Calu3 (cell line): ENCODE measurements at regions of chr3 and their contacts with region 1.

Region 1: DNA sequence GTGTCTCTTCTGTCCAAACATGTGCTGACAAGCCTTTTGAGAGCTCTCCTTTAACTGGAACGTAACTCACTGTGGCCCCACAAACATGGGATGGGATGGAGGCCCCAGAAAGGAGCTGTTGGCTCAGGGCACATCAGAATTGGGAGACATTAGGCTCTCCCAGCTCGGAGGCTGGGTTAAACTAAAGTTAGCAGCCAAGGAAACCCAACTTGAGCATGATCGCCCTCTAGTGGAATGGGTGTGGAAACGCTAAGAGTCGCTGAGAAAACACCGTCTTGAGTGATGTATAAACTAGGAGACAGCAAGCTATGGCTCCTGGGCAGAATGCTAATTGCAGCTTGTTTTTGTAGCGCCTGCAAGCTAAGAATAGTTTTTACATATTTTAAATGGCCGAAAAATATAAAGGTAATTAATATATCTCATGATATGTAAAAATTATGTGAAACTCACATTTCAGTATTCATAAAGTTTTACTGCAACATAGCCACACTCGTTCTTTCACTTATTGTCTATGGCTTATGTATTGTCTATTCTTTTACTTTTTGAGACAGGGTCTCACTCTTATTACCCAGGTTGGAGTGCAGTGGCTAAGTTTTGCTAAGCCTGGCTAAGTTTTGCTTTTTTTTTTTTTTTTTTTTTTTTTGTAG is 138.8 kb upstream of the HACD2 start:
- DNase-seq: peak; percentile 66
- H3K4me3 Mint-ChIP-seq: no peak overlapping the region
- H3K27ac Mint-ChIP-seq: no peak overlapping the region
- H3K4me1 Mint-ChIP-seq: no peaks in the 10 kb centered on the region
- H3K27me3 Mint-ChIP-seq: no peaks in the 10 kb centered on the region
- CTCF ChIP-seq: no peak

Region 2: GRCh38 chr3:124486324-124486723 is 762.7 kb after region 1 on chr3:
- CTCF ChIA-PET with region 1: interaction called, 12 read pairs
- intact Hi-C with region 1: no loop called
- DNase-seq: no peak
- H3K4me3 Mint-ChIP-seq: no peak overlapping the region
- H3K27ac Mint-ChIP-seq: no peak overlapping the region
- H3K4me1 Mint-ChIP-seq: no peaks in the 10 kb centered on the region
- H3K27me3 Mint-ChIP-seq: peaks cover 80% of the 10 kb centered on the region
- CTCF ChIP-seq: no peak